GM12878 (cell line): ENCODE measurements at regions of chr14 and their contacts with region 1.

Region 1: DNA sequence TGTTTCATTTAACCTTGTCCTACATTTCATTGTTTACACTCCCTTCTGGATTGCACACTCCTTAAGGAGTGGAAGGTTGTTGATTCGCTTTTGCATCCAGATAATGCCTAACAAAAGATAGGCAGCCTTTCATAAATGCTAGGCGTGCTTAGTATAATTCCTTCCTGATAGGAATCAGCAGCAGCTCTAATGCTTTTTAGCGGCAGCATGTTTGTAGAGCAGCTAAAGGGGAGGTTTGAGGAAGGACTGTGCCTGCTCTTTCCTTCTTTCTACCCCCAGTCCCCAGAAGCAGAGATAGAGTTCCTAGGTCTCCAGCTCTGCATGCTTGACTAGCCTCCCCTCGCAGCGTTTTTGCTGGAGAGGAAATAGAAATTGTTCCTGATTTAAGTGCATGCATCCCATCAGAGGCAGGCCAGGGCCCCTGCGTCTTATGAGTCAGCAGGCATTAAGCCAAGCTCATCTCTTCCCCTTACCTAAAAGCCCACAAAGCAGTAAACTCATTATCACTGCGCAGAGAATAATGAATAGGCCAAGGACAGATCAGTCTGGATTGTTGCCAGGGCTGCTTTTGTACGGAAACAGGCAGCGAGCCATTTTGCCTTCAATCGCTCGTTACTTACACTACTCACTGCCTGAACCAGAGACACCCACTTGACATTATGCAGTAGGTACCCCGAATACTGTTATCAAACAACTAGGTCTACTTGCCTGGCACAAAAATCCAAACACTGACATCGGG is 14.0 kb upstream of the TBPL2 start:
- DNase-seq: no peak
- ATAC-seq: peak; percentile 19
- H3K4me3 ChIP-seq: no peak overlapping the region
- H3K27ac ChIP-seq: no peak overlapping the region
- H3K4me1 ChIP-seq: peaks cover 5% of the 10 kb centered on the region; the same call in 1 of the 2 replicates
- H3K27me3 ChIP-seq: no peaks in the 10 kb centered on the region
- CTCF ChIP-seq: no peak
- EP300 ChIP-seq: no peak
- POLR2A ChIP-seq: no peak
- RAD21 ChIP-seq: no peak

Region 2: DNA sequence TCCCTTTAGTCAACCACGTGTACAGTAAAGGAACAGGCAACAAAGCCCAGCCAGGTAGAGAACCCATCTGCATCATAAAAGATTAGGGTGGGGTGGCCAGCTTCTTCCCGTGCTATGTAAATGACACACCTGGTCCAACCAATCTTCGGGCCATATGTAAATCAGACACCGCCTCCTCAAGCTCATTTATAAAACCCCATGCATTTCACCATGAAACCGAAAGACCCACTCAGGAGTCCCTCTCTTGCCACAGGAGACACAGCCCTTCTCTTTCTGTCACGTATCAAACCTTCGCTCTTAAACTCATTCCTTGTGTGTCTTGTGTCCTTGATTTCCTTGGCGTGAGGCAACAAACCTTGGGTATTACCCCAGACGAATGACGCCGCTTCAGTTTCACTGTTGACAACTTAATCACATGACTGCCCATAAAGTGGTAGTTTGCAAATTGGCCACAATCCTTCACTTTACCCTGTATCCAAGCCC is 45.8 kb after region 1 on chr14:
- CTCF ChIA-PET with region 1: no interaction called
- POLR2A ChIA-PET with region 1: no interaction called
- RAD21 ChIA-PET with region 1: no interaction called
- SMC1A ChIA-PET with region 1: no interaction called
- in situ Hi-C with region 1: no loop called
- intact Hi-C with region 1: no loop called
- DNase-seq: no peak
- ATAC-seq: no peak
- H3K4me3 ChIP-seq: no peak overlapping the region
- H3K27ac ChIP-seq: no peak overlapping the region
- H3K4me1 ChIP-seq: no peaks in the 10 kb centered on the region
- H3K27me3 ChIP-seq: no peaks in the 10 kb centered on the region
- CTCF ChIP-seq: no peak
- EP300 ChIP-seq: no peak
- POLR2A ChIP-seq: no peak
- RAD21 ChIP-seq: no peak

Region 3: DNA sequence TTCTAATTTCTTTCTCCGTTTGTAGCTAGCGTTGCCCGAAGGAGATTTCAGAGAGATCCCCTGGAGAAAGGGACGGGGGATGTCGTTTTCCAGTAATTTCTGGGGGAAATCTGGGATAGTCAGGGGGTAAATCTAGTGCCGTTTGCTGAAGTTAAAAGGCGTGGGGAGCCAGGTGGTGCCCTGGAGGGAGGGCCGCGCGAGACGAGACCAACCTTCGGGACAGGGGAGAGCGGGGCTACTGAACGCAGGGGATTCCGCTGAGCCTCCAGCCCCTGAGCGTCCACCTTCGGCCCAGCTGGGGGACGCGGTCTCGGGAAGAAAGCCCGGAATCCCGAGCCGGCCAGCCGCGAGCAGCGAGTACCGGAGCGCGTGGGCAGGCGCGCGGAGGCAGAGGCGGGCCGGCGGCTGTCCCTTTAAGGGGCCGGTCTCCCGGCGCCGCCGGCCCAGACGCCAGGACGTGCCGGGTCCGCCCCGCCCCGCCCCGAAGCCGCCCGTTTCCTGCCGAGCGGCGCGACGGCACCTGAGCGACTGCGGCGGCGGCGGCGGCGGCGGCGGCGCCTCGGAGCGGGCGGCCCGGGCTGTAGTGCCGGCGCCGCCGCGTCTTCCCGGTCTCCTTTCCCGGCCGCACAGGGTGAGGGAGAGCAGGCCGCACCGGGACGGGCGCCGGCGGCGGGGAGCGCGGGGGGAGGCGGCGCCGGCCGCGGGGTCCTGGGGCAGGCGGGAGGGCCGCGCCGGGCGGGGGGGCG is 125.5 kb after region 1 on chr14 and contains the start of gene KTN1:
- CTCF ChIA-PET with region 1: interaction called, 3 read pairs
- POLR2A ChIA-PET with region 1: interaction called, 6 read pairs
- RAD21 ChIA-PET with region 1: interaction called, 8 read pairs
- SMC1A ChIA-PET with region 1: interaction called, 5 read pairs
- in situ Hi-C with region 1: no loop called
- intact Hi-C with region 1: loop called (anchors 2 kb)
- DNase-seq: no peak
- ATAC-seq: peak; percentile 86
- H3K4me3 ChIP-seq: peak within 1 kb of the TSS; percentile 91
- H3K27ac ChIP-seq: peak within 1 kb of the TSS; percentile 85
- H3K4me1 ChIP-seq: peaks cover 12% of the 10 kb centered on the region
- H3K27me3 ChIP-seq: no peaks in the 10 kb centered on the region
- CTCF ChIP-seq: no peak
- EP300 ChIP-seq: 0 out of 4 replicates have a peak, but pooled peaks of 1 of the 2 experiments have one; percentile 17
- POLR2A ChIP-seq: peak; percentile 68
- RAD21 ChIP-seq: no peak
- polyA plus RNA-seq, gene KTN1: 52.9 to 79.5 TPM

Region 4: GRCh38 chr14:55832122-55832911 is 377.9 kb after region 1 on chr14:
- CTCF ChIA-PET with region 1: no interaction called
- POLR2A ChIA-PET with region 1: no interaction called
- RAD21 ChIA-PET with region 1: no interaction called
- SMC1A ChIA-PET with region 1: no interaction called
- in situ Hi-C with region 1: no loop called
- intact Hi-C with region 1: no loop called
- DNase-seq: no peak
- ATAC-seq: no peak
- H3K4me3 ChIP-seq: no peak overlapping the region
- H3K27ac ChIP-seq: no peak overlapping the region
- H3K4me1 ChIP-seq: no peaks in the 10 kb centered on the region
- H3K27me3 ChIP-seq: no peaks in the 10 kb centered on the region
- CTCF ChIP-seq: no peak
- EP300 ChIP-seq: no peak
- POLR2A ChIP-seq: no peak
- RAD21 ChIP-seq: no peak